ENCODE measurements at regions of chr13 and their contacts with region 1.

Region 1: GRCh38 chr13:20475927-20476691 is 49.5 kb downstream of the CRYL1 start:
- DNase-seq: peak in 1 of 3 donors; percentile 50
- ATAC-seq: peak; percentile 53 to 86 (median 73)
- H3K4me3 ChIP-seq: no peak overlapping the region
- H3K27ac ChIP-seq: peak overlapping the region in 2 of 3 donors; percentile 21 to 53
- H3K4me1 ChIP-seq: no peaks in the 10 kb centered on the region
- H3K27me3 ChIP-seq: no peaks in the 10 kb centered on the region
- CTCF ChIP-seq: no peak
- POLR2A ChIP-seq: no peak

Region 2: GRCh38 chr13:20197361-20197834 is 278.7 kb before region 1 on chr13:
- intact Hi-C with region 1: loop called in 1 of 2 experiments (anchors 10 kb)
- DNase-seq: no peak
- ATAC-seq: peak; percentile 71 to 76 (median 72)
- H3K4me3 ChIP-seq: no peak overlapping the region
- H3K27ac ChIP-seq: peak overlapping the region in 1 of 3 donors; percentile 19
- H3K4me1 ChIP-seq: peaks cover 0 to 27% (median 6%) of the 10 kb centered on the region in 4 donors
- H3K27me3 ChIP-seq: no peaks in the 10 kb centered on the region
- CTCF ChIP-seq: peak; percentile 51 to 74 (median 72)
- POLR2A ChIP-seq: no peak

Region 3: DNA sequence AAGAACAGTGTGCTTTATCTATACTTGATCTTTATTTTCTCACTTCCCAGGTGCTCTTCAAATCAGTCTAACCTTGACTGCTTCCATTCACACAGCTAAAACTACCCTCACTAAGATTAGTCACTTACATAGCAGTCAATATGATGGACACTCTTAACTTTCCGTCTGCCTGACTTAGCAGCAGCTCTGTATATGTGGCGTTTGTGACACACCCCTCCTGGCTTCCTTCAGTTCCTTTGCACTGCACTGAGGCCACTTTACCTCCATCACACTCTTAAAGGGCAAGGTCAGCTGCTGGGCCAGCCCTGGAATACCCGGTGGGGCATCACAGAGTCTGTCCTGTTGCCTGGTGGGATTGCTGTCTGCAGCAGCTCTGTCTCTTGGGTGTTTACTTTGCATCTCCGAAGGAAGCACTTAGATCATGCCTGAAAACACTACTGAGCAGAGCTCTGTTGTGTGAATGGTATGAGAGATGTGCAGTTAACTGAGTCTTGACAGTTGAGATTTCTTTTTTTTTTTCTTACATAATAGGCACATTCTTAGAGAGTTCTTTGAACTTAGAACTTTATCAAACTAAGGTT is 191.8 kb after region 1 on chr13:
- intact Hi-C with region 1: no loop called
- DNase-seq: no peak
- ATAC-seq: no peak
- H3K4me3 ChIP-seq: no peak overlapping the region
- H3K27ac ChIP-seq: no peak overlapping the region
- H3K4me1 ChIP-seq: no peaks in the 10 kb centered on the region
- H3K27me3 ChIP-seq: no peaks in the 10 kb centered on the region
- CTCF ChIP-seq: no peak
- POLR2A ChIP-seq: no peak

Region 4: GRCh38 chr13:21458813-21459701 is 982.9 kb after region 1 on chr13 and contains the start of gene ZDHHC20:
- intact Hi-C with region 1: no loop called
- DNase-seq: peak; percentile 91 to 94 (median 91)
- ATAC-seq: peak; percentile 95 to 98 (median 96)
- H3K4me3 ChIP-seq: peak within 1 kb of the TSS; percentile 79 to 99 (median 95)
- H3K27ac ChIP-seq: peak within 1 kb of the TSS; percentile 83 to 92 (median 90)
- H3K4me1 ChIP-seq: peaks cover 0 to 13% (median 0%) of the 10 kb centered on the region in 4 donors
- H3K27me3 ChIP-seq: no peaks in the 10 kb centered on the region
- CTCF ChIP-seq: no peak
- POLR2A ChIP-seq: peak; percentile 92
- total RNA-seq, gene ZDHHC20: 19.2 to 28.9 (median 23.4) TPM